ENCODE measurements at regions of chr14 and their contacts with region 1.

Region 1: GRCh38 chr14:50099335-50099734 is 17.0 kb downstream of the VCPKMT start:
- DNase-seq: no peak
- H3K4me3 ChIP-seq: no peak overlapping the region
- H3K27ac ChIP-seq: no peak overlapping the region
- H3K4me1 ChIP-seq: peaks cover 9 to 63% (median 28%) of the 10 kb centered on the region in 6 donors
- H3K27me3 ChIP-seq: no peaks in the 10 kb centered on the region
- CTCF ChIP-seq: no peak
- POLR2A ChIP-seq: no peak

Region 2: DNA sequence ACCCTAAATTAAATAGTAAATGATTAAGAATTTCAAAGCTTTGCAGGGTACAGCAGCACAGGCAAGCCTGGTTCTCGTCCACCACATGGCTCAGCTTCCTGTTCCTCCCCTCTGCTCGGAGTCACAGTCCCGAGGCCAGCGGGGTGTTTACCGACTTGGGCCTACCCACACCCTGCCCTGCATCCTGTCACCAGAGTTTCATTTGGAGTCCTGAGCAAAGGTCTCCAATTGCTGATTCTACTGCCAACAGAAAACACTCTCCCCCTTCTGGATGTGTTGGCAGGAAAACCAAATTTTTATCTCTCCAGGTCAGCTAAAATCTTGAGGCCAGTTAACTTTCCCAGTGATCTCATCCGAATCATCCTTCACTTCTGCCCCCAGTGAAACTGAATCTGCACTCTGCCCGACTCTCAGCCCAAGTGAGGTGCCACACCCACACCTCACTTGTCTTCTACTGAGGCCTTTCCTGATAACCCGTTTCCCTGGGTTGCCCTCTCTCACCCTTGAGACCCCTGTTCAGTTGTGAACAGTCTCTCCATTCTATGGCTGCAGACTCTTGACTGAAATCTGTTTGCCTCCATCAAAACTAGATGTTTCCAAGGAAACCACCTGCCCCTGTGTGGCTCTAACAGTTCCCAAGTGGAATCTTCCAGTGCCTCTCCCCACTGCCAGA is 54.2 kb before region 1 on chr14:
- intact Hi-C with region 1: loop called (anchors 10 kb)
- DNase-seq: peak; percentile 96
- H3K4me3 ChIP-seq: no peak overlapping the region
- H3K27ac ChIP-seq: peak overlapping the region; percentile 77 to 94 (median 87)
- H3K4me1 ChIP-seq: peaks cover 36 to 76% (median 65%) of the 10 kb centered on the region in 6 donors
- H3K27me3 ChIP-seq: no peaks in the 10 kb centered on the region
- CTCF ChIP-seq: peak in 3 of 11 experiments; percentile 5 to 36 (median 7)
- POLR2A ChIP-seq: no peak

Region 3: GRCh38 chr14:50578433-50578832 is 479.1 kb after region 1 on chr14:
- intact Hi-C with region 1: no loop called
- DNase-seq: no peak
- H3K4me3 ChIP-seq: no peak overlapping the region
- H3K27ac ChIP-seq: no peak overlapping the region
- H3K4me1 ChIP-seq: no peaks in the 10 kb centered on the region
- H3K27me3 ChIP-seq: no peaks in the 10 kb centered on the region
- CTCF ChIP-seq: no peak
- POLR2A ChIP-seq: no peak

Measured in spleen (tissue), 13 donors.